KBM-7 (cell line): ENCODE measurements at regions of chr1 and their contacts with region 1.

Region 1: DNA sequence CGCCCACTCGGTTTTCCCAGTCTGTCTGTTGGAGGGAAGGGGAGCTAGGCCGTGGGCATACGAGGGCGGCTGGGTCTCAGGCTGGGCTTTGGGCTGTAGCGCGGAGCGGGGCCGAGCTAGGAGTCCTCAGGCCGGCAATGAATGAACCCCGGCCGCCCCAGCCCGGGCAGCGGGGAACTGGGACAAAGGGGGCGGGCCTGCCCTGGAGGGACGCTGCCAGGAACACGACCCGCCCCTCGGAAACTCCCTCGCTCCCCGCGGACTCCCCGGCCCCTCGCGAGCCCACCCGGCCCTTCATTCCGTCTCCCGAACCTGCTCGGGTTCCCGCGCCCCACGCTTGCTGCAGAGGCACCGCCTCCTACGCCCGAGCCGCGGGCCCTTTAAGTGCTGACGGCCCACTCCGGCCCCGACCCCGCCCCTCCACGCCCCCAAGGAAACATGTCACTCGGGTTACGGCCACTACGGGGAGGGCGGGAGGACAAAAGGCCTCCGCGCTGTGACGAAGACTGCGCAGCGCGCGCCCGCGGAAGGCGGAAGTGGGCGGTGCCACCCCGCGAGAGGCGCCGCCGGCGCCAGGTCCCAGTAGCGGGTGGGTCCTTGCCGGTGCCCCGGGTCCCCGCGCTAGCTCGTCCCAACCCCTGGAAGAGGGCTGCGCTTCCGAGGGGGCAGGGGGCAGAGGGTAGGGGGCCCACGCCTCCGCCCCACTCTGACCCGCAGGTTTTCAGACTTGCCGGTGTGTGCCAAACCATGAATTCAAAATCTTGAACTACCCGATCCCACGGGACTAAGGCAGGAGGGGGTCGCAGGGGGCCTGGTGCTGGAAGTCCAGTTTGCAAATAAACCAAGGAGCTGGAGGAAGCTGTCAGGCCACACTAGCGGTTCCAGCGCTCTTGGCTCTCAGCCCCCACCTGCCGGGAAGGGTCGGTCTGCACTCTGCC is at the start of gene GALE:
- DNase-seq: peak; percentile 93

Region 2: DNA sequence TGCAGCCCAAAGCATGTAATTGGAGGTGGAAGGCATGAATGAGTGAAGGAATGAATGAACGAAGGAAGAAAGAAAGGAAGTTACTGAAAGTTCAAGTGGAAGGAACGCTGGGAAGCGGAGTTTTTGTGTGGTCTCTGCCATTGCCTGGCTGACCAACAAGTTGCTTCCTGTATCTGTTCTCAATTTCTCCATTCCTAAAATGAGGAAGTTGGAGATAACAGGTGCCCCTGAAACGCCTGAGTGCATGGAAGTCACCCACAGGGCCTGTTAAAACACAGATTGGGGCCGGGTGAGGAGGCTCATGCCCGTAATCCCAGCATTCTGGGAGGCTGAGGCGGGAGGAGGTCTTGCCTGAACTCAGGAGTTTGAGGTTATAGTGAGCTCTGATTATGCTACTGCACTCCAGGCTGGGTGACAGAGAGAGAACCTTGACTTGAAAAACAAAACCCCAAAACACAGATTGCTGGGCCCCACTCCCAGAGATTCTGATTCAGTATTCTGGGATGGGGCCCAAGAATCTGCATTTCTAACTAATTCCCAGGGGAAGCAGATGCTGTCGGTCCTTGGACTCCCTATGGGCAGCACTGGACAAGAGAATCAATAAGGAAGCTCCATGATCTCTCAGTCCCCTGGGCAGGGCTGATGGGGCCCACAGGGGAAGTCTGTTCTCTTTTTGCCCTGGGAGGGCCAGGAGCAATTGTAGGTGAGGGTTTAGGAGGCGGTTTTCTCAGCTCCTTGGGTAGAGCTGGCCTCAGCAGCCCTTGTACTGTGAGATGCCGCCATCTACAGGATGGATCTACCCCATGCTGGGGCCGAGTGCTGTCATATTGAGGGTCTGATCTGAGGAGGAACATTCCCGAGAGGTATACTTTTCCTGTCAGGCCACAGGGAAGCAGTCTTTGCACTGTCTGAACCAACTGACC is 115.8 kb after region 1 on chr1:
- in situ Hi-C with region 1: loop called (anchors 25 kb)
- DNase-seq: peak; percentile 93